ENCODE measurements at regions of chr13 and their contacts with region 1.

Region 1: GRCh38 chr13:33003461-33004019 is 12.7 kb upstream of the KL start:
- DNase-seq: no peak
- H3K4me3 ChIP-seq: no peak overlapping the region
- H3K27ac ChIP-seq: no peak overlapping the region
- H3K4me1 ChIP-seq: no peaks in the 10 kb centered on the region
- CTCF ChIP-seq: no peak

Region 2: DNA sequence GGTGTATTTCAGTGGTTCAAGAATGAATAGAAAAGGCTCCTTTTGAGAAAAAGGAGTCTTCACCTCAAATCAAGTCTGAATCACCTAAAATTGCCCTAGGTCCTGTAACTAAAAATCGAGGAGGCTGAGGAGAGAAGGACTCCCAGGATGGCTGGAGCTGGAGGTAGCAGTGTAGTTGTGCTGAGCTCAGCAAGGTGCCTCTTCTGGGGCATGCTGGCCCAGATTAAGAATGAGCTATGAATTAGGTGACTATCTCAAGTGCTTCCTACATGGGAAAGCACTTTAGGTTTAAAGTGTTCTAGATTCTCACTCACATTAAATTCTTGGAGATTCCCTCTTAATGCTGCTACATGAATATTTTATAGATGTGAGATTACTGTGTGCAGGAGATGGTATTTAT is 16.1 kb before region 1 on chr13:
- CTCF ChIA-PET with region 1: no interaction called
- POLR2A ChIA-PET with region 1: no interaction called
- intact Hi-C with region 1: loop called (anchors 1 kb)
- DNase-seq: no peak
- H3K4me3 ChIP-seq: no peak overlapping the region
- H3K27ac ChIP-seq: no peak overlapping the region
- H3K4me1 ChIP-seq: peaks cover 15% of the 10 kb centered on the region
- CTCF ChIP-seq: no peak